ENCODE measurements at regions of chr1 and their contacts with region 1.

Region 1: DNA sequence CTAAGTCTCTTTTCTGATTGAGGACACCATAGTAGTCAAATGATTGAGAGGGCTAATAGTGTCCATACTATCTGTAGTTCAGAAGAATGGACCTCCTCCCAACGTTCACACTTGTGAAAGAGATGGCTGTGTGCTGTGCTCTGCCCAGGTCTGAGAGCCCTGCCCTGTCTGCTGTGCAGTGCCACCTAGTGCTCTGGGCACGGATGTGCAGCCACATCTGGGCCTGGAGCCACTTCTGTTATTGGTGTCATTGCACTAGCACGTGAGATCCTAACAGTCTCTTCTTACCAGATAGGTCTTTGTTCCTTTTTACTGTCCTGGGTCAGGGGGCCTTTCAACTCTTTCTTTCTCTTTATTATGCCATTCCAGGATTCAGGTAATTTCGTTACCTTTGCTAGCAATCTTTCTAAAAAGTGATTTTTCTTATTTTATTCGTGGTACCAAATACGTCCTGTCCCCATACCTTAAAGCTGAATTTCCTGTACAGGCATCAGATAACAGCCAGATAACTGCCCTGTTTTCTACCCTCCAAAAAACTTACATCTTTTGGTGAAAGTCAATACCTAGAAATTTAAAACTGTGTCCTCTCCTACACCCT is 21.7 kb downstream of the INTS3 start:
- DNase-seq: peak; percentile 82 to 86
- ATAC-seq: peak; percentile 89 to 96 (median 94)
- H3K4me3 ChIP-seq: no peak overlapping the region
- H3K27ac ChIP-seq: peak overlapping the region in 9 of 10 donors; percentile 24 to 76 (median 71)
- H3K4me1 ChIP-seq: peaks cover 26 to 75% (median 43%) of the 10 kb centered on the region in 9 donors
- H3K27me3 ChIP-seq: no peaks in the 10 kb centered on the region
- CTCF ChIP-seq: peak; percentile 85 to 97 (median 95)

Region 2: DNA sequence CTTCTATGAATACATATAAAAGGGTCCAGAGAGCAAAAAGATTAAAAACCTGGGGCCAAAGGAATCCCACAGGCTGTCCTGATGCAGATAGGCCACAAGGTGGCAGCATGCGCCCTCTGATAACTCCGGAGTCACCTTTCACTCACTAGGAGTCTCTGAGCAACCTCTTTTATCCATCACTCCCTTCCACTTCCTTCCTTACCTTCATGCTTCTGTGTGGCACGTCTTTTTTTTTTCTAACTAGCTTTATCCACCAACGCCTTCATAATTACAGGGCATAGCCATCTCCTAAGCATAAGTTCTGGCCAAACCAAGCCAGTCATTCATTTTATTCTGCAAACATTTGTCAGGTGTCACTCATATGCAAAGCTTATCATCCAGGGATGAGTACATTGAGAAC is 397.0 kb before region 1 on chr1:
- intact Hi-C with region 1: loop called in 1 of 10 experiments (anchors 10 kb)
- DNase-seq: peak; percentile 50 to 54
- ATAC-seq: peak in 7 of 8 donors; percentile 62 to 86 (median 81)
- H3K4me3 ChIP-seq: no peak overlapping the region
- H3K27ac ChIP-seq: no peak overlapping the region
- H3K4me1 ChIP-seq: peaks cover 0 to 19% (median 0%) of the 10 kb centered on the region in 9 donors
- H3K27me3 ChIP-seq: peaks cover 0 to 44% (median 24%) of the 10 kb centered on the region in 7 donors
- CTCF ChIP-seq: peak; percentile 78 to 95 (median 93)

Region 3: GRCh38 chr1:153510984-153511410 is 238.5 kb before region 1 on chr1:
- intact Hi-C with region 1: loop called in 3 of 10 experiments (anchors 5 to 10 kb)
- DNase-seq: peak; percentile 80 to 85
- ATAC-seq: peak; percentile 41 to 73 (median 64)
- H3K4me3 ChIP-seq: no peak overlapping the region
- H3K27ac ChIP-seq: no peak overlapping the region
- H3K4me1 ChIP-seq: peaks cover 9 to 38% (median 21%) of the 10 kb centered on the region in 9 donors
- H3K27me3 ChIP-seq: no peaks in the 10 kb centered on the region
- CTCF ChIP-seq: peak; percentile 82 to 99 (median 95)

Region 4: GRCh38 chr1:153677718-153678505 is 71.6 kb before region 1 on chr1:
- intact Hi-C with region 1: loop called (anchors 1 to 5 kb)
- DNase-seq: peak; percentile 40 to 54
- ATAC-seq: peak; percentile 52 to 87 (median 76)
- H3K4me3 ChIP-seq: peak overlapping the region; percentile 48 to 73 (median 66)
- H3K27ac ChIP-seq: peak overlapping the region; percentile 44 to 85 (median 78)
- H3K4me1 ChIP-seq: peaks cover 8 to 28% (median 22%) of the 10 kb centered on the region in 9 donors
- H3K27me3 ChIP-seq: peaks cover 9 to 41% (median 19%) of the 10 kb centered on the region in 7 donors
- CTCF ChIP-seq: peak; percentile 79 to 96 (median 93)

Region 5: DNA sequence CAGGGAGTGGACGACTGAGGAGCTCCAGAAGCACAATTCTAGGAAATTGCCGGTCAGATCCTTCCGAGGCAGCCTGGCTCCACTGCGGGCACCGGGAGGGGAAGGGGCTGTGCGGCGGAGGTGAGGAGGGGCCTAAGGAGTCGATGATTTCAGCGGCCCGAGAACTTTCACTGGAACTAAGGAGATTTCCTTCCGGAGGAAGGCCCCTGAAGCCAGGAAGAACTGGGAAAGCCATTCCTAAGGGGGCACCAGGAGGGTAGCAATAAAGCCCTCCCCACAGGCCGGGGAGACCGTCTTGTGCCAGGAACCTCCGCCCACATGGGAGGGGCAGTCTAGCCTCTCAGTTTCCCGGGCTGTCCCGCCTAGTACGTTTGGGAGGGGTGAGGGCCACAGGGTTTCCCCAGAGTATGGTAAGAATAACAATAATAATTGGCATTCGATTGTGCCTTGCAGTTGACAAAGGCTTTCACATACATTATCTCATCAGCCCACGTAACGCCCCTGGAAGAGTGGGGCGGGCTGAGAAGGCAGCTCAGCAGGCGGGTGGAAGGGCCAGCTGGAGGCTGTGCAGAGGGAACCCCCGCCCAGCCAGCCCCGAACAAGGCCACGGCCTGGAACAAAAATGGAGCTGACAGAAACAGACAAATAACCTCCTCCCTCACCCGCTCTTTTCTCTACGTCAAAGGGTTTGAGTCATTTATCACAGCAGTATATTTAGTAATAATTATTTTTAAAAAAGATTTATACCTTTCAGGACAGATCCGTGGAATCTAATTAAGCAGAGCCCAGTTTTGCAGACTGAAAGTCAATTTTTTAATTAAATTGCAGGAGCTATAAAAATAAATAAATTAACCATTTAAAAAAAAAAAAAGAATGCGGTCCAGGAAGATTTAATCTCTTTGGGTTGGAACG is 51.2 kb before region 1 on chr1:
- intact Hi-C with region 1: loop called in 1 of 10 experiments (anchors 5 kb)
- DNase-seq: peak; percentile 77 to 81
- ATAC-seq: peak; percentile 87 to 96 (median 90)
- H3K4me3 ChIP-seq: peak overlapping the region in 7 of 10 donors; percentile 1 to 26 (median 19)
- H3K27ac ChIP-seq: peak overlapping the region; percentile 82 to 96 (median 89)
- H3K4me1 ChIP-seq: peaks cover 11 to 36% (median 30%) of the 10 kb centered on the region in 9 donors
- H3K27me3 ChIP-seq: no peaks in the 10 kb centered on the region
- CTCF ChIP-seq: no peak

Region 6: DNA sequence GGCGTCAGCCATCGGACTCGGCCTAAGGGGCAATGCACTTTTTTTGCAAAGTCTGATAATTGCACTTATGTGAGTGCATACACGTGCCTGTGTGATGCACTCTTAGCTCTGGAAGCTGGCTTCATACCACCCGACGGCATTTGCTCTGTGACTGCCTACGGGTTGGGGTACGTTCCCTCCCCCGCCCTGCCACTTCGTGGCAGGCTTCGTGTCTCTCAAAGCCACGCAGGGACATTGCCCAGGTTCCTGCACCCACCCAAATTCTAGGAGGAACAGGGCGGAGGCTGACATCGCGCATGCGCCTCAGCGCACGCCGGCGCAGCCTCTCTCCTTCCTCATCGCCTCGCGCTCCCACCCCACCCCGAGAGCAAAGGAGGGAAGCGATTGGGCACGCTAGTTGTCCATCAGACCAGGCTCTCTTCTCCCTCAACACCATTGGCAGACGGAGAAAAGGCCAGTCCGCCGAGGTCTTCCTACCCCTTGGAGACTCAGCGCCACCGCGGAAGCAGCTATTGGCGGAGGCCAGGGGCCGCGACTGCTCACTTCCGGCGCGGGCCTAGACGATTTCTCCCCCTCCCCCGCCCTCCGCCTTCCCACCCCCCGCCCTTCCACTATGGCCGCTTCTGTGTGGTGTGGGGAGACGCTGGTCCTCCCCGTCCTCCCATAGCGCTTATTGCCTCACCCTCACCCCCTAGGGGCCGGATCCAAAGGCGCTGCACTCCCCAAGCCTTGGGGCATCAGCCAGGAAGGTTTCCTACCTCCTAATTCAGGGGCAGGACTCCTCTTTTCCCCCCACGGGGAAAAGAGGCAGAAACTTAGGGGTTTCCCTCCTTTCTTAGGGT is 21.8 kb before region 1 on chr1 and contains the start of gene INTS3:
- intact Hi-C with region 1: loop called in 3 of 10 experiments (anchors 1 to 2 kb)
- DNase-seq: peak; percentile 99 to 100
- ATAC-seq: peak; percentile 99 to 100 (median 100)
- H3K4me3 ChIP-seq: peak within 1 kb of the TSS; percentile 48 to 92 (median 78)
- H3K27ac ChIP-seq: peak within 1 kb of the TSS; percentile 96 to 100 (median 99)
- H3K4me1 ChIP-seq: peaks cover 0 to 36% (median 30%) of the 10 kb centered on the region in 9 donors
- H3K27me3 ChIP-seq: no peaks in the 10 kb centered on the region
- CTCF ChIP-seq: peak in 3 of 9 donors; percentile 8 to 22 (median 15)
- total RNA-seq, gene INTS3: 25.4 to 32.8 (median 31.1) TPM

Region 7: DNA sequence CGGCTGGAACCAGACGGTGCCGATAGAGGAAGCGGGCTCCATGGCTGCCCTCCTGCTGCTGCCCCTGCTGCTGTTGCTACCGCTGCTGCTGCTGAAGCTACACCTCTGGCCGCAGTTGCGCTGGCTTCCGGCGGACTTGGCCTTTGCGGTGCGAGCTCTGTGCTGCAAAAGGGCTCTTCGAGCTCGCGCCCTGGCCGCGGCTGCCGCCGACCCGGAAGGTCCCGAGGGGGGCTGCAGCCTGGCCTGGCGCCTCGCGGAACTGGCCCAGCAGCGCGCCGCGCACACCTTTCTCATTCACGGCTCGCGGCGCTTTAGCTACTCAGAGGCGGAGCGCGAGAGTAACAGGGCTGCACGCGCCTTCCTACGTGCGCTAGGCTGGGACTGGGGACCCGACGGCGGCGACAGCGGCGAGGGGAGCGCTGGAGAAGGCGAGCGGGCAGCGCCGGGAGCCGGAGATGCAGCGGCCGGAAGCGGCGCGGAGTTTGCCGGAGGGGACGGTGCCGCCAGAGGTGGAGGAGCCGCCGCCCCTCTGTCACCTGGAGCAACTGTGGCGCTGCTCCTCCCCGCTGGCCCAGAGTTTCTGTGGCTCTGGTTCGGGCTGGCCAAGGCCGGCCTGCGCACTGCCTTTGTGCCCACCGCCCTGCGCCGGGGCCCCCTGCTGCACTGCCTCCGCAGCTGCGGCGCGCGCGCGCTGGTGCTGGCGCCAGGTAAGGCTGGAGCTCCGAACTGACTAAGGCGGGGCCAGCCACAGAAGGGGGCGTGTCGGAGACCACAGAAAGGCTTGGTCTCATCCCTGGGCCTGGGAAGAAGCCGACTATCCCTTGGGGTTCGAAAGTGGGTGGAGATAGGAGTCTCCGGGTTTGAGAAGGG is 26.2 kb after region 1 on chr1:
- intact Hi-C with region 1: loop called in 1 of 10 experiments (anchors 2 kb)
- DNase-seq: peak; percentile 71 to 73
- ATAC-seq: peak; percentile 23 to 46 (median 36)
- H3K4me3 ChIP-seq: peak overlapping the region; percentile 54 to 94 (median 85)
- H3K27ac ChIP-seq: peak overlapping the region; percentile 72 to 92 (median 86)
- H3K4me1 ChIP-seq: peaks cover 27 to 92% (median 76%) of the 10 kb centered on the region in 9 donors
- H3K27me3 ChIP-seq: no peaks in the 10 kb centered on the region
- CTCF ChIP-seq: peak in 1 of 9 donors; percentile 7

Measured in heart right ventricle (tissue), 16 donors.